ENCODE measurements at regions of chr2 and their contacts with region 1.

Region 1: GRCh38 chr2:187842978-187843847 is 289.0 kb upstream of the TFPI start:
- DNase-seq: peak; percentile 31 to 76
- H3K4me3 ChIP-seq: no peak overlapping the region
- H3K4me1 ChIP-seq: no peaks in the 10 kb centered on the region; the same call in 1 of the 2 replicates
- H3K27me3 ChIP-seq: no peaks in the 10 kb centered on the region

Region 2: GRCh38 chr2:187499941-187500532 is 343.2 kb before region 1 on chr2:
- in situ Hi-C with region 1: loop called (anchors 25 kb)
- DNase-seq: peak; percentile 59 to 66
- H3K4me3 ChIP-seq: no peak overlapping the region
- H3K4me1 ChIP-seq: no peaks in the 10 kb centered on the region
- H3K27me3 ChIP-seq: no peaks in the 10 kb centered on the region

Region 3: GRCh38 chr2:187581125-187581896 is 261.9 kb before region 1 on chr2:
- in situ Hi-C with region 1: loop called (anchors 25 kb)
- DNase-seq: peak; percentile 42 to 66
- H3K4me3 ChIP-seq: no peak overlapping the region
- H3K4me1 ChIP-seq: no peaks in the 10 kb centered on the region; the same call in 1 of the 2 replicates
- H3K27me3 ChIP-seq: no peaks in the 10 kb centered on the region

Region 4: GRCh38 chr2:188132385-188132784 is 289.2 kb after region 1 on chr2:
- in situ Hi-C with region 1: no loop called
- DNase-seq: no peak
- H3K4me3 ChIP-seq: no peak overlapping the region
- H3K4me1 ChIP-seq: no peaks in the 10 kb centered on the region
- H3K27me3 ChIP-seq: 0 out of 2 replicates have a peak, but pooled peaks cover 4% of the 10 kb centered on the region